ENCODE measurements at regions of chr15 and their contacts with region 1.

Region 1: DNA sequence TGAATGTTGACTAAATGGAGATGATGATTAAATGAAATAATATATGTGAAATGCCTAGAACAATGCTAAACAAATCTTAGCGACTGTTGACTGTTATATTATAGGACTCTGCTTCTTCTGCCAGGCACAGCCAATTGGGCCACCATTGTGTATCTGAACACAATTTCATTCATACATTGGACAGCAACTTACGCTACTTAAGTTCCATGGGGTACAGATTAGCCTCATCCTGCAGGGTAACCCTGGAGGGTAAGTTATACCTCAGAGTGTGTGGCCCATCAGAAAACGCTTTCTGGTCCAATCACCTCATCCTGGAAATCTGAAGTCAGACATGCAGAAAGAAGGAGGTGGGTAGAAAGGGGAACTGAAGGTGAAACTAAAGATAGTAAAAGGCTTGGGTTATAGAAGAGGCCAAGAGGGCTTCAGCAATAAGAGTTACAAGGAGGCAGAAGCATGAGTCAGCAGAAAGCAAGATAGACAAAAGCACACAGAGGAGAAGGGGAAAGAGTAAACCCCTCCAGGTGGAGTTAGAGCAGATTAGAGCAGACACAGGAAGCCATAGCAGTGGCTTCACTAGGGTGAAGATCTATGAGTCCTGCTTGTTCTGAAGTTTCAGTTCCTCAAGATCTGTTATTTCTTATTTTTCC is 119.3 kb upstream of the SLC24A5 start:
- DNase-seq: no peak
- ATAC-seq: no peak
- H3K4me3 ChIP-seq: no peak overlapping the region
- H3K27ac ChIP-seq: no peak overlapping the region
- H3K4me1 ChIP-seq: no peaks in the 10 kb centered on the region
- H3K27me3 ChIP-seq: no peaks in the 10 kb centered on the region

Region 2: DNA sequence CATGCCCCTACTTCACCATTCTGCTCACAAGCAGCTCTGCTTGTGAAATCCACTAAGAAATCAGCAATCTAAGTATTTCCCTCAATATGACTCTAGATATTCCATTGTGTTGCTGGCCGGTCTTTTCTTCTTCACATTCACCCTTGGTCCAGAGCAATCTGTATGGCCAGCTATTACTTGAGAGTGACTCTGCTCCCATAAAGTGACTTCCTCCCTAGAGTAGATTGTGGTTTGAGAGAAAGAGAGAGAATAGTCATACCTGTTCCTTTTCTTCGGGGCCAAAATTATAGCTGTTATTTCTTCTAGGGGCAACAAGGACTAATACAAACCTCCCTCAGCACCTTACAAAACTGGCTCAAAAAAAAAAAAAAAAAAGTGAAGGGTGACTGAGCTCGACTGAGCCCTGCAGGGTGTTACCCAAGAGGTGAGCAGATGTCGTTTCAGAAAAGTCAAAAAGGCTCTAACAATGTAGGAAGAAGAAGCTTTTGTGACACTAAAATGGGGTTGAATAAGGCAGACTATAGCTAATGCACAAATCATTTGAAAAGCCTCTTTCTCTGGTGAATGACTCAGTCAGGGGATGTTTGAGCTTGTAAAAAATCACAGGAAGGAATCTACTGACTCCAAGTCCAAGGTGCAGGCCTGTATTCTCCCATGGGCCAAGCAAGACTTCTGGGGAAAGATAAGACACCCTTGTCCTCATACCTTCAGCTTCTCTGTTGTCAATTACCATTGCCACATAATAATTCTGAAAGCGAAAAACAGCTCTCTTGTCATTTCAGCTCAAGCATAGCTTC is 41.7 kb before region 1 on chr15:
- intact Hi-C with region 1: no loop called
- DNase-seq: no peak
- ATAC-seq: no peak
- H3K4me3 ChIP-seq: no peak overlapping the region
- H3K27ac ChIP-seq: no peak overlapping the region
- H3K4me1 ChIP-seq: no peaks in the 10 kb centered on the region
- H3K27me3 ChIP-seq: no peaks in the 10 kb centered on the region

Region 3: DNA sequence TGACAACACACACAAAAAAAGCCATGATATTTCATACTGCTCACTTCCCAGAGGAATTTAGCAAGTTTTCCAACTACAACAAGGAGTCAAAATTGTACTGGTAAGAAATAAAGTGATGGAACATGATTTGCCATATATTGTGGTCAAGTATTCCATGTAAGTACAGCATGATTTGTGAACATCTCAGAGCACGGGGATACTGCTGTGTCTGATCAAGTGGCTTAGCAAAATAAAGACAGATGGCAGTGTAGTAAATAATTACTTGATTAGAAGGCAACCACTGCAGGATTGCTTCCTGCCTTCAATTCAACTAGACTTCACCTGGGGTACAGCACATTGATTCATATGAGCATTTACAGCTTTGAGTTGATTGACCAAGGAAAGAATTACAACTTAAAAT is 278.1 kb after region 1 on chr15:
- intact Hi-C with region 1: loop called in 1 of 2 experiments (anchors 5 kb)
- DNase-seq: no peak
- ATAC-seq: no peak
- H3K4me3 ChIP-seq: no peak overlapping the region
- H3K27ac ChIP-seq: no peak overlapping the region
- H3K4me1 ChIP-seq: peaks cover 0 to 22% of the 10 kb centered on the region in 2 donors
- H3K27me3 ChIP-seq: no peaks in the 10 kb centered on the region

Region 4: GRCh38 chr15:48657950-48658591 is 656.6 kb after region 1 on chr15:
- intact Hi-C with region 1: no loop called
- DNase-seq: no peak
- ATAC-seq: no peak
- H3K4me3 ChIP-seq: no peak overlapping the region
- H3K27ac ChIP-seq: no peak overlapping the region
- H3K4me1 ChIP-seq: no peaks in the 10 kb centered on the region
- H3K27me3 ChIP-seq: no peaks in the 10 kb centered on the region

Region 5: DNA sequence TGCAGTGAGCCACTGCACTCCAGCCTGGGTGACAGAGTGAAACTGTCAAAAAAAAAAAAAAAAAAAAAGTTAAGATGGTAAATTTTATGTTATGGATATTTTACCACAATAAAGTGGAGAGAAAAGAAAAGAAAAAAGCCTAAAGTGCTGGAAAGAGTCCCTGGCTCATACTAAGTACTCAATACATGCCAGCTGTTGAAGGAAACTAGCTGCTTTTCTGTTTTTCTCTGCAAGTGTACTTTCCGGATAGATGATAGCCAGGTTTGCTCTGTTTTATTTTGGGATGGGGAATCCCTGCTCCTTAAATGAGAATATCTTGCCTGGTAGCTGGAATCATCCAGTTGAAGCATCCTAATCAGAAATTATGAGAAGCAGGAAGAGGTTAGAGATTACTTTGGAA is 887.3 kb after region 1 on chr15:
- intact Hi-C with region 1: no loop called
- DNase-seq: no peak
- ATAC-seq: peak; percentile 50
- H3K4me3 ChIP-seq: no peak overlapping the region
- H3K27ac ChIP-seq: peak overlapping the region; percentile 43 to 59
- H3K4me1 ChIP-seq: peaks cover 0 to 3% of the 10 kb centered on the region in 2 donors
- H3K27me3 ChIP-seq: no peaks in the 10 kb centered on the region